T-cell (primary cell): ENCODE measurements at regions of chr10 and their contacts with region 1.

Region 1: DNA sequence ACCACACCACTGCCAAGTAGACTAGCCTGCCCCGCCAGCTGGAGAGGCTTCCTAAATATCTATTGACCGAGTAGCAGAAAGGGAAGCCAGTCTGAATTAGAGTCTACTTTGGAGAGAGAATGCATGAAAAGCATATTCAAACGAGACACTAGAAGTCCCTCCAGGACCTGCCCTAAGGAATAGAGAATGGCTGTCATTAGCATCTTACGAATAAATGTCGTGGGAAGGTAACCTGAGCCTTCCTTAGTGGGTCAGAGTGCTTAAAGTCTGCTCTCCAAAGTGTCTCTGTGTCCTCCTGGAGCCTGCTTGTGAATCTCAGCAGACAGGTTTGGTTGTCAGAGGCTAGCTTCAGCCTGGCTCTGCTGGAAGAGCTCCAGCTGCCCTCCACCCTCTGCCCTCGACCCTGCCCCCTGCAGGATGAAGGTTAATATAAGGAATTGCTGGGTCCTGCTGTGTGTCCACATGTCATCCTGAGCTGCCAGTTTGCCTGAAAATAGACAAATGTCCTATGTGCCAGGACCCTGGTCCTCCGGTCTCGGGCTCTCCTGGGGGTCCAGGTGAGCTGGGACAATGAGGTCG is 33.4 kb downstream of the FAM241B start:
- DNase-seq: no peak
- ATAC-seq: no peak
- H3K4me3 ChIP-seq: no peak overlapping the region
- H3K4me3 Mint-ChIP-seq: no peak overlapping the region
- H3K27ac ChIP-seq: no peak overlapping the region
- H3K27ac Mint-ChIP-seq: no peak overlapping the region
- H3K4me1 ChIP-seq: no peaks in the 10 kb centered on the region
- H3K4me1 Mint-ChIP-seq: no peaks in the 10 kb centered on the region
- H3K27me3 ChIP-seq: peaks cover 0 to 59% of the 10 kb centered on the region in 2 experiments
- H3K27me3 Mint-ChIP-seq: peaks cover 15 to 24% of the 10 kb centered on the region in 2 donors

Region 2: DNA sequence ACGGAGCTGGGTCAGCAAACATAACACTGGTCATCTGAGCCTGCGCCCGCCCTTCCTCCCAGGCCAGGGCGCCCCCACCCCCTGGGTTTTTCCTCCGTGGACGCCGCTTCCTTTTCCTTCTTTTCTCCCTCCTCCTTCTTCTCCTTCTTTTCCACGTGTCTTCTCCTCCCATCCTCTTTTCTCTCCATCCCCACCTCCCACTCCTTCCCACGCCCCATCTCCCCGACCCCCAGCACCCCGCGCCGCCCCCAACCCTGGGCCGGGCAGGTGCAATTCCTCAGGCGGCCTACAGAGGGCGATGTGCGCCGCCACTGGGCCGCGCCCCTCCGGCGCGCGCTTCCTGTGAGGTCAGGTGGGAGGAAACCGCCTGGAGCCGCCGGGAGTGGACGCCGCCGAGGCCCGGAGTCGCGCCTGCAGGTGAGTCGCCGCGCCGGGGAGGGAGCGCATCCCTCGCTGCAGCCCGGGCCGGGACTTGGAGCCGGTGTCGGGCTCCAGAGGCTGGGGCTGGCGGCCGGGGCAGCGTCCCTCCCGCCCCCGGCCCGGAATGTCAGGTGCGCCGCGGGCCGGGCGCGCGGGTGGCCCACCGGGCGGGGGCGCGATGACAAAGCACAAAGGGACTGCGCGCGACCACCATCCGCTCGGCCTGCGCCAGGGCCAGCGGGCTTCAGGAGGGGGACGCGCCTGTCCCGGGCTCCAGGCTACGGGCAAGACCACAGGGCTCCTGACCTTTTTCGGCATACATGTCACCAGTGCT is 33.4 kb before region 1 on chr10 and contains the start of gene FAM241B:
- CTCF ChIA-PET with region 1: no interaction called
- POLR2A ChIA-PET with region 1: no interaction called
- DNase-seq: peak; percentile 51 to 82 (median 65)
- ATAC-seq: peak; percentile 93 to 97 (median 94)
- H3K4me3 ChIP-seq: peak within 1 kb of the TSS; percentile 51 to 54
- H3K4me3 Mint-ChIP-seq: peak within 1 kb of the TSS; percentile 69 to 76 (median 76)
- H3K27ac ChIP-seq: peak within 1 kb of the TSS; percentile 32
- H3K27ac Mint-ChIP-seq: peak within 1 kb of the TSS; percentile 52 to 64
- H3K4me1 ChIP-seq: peaks cover 0 to 16% of the 10 kb centered on the region in 2 experiments
- H3K4me1 Mint-ChIP-seq: peaks cover 15 to 29% (median 23%) of the 10 kb centered on the region in 3 donors
- H3K27me3 ChIP-seq: no peaks in the 10 kb centered on the region
- H3K27me3 Mint-ChIP-seq: no peaks in the 10 kb centered on the region
- total RNA-seq, gene FAM241B: 7.4 to 11.8 (median 9.2) TPM

Region 3: GRCh38 chr10:69681436-69681835 is 18.0 kb after region 1 on chr10:
- CTCF ChIA-PET with region 1: no interaction called
- POLR2A ChIA-PET with region 1: interaction called in 1 of 2 experiments, 12 read pairs
- DNase-seq: no peak
- ATAC-seq: no peak
- H3K4me3 ChIP-seq: no peak overlapping the region
- H3K4me3 Mint-ChIP-seq: no peak overlapping the region
- H3K27ac ChIP-seq: no peak overlapping the region
- H3K27ac Mint-ChIP-seq: no peak overlapping the region
- H3K4me1 ChIP-seq: no peaks in the 10 kb centered on the region
- H3K4me1 Mint-ChIP-seq: no peaks in the 10 kb centered on the region
- H3K27me3 ChIP-seq: peaks cover 0 to 46% of the 10 kb centered on the region in 2 experiments
- H3K27me3 Mint-ChIP-seq: peaks cover 21 to 30% of the 10 kb centered on the region in 2 donors